Colonic mucosa (tissue), 4 donors: ENCODE measurements at regions of chr1 and their contacts with region 1.

Region 1: DNA sequence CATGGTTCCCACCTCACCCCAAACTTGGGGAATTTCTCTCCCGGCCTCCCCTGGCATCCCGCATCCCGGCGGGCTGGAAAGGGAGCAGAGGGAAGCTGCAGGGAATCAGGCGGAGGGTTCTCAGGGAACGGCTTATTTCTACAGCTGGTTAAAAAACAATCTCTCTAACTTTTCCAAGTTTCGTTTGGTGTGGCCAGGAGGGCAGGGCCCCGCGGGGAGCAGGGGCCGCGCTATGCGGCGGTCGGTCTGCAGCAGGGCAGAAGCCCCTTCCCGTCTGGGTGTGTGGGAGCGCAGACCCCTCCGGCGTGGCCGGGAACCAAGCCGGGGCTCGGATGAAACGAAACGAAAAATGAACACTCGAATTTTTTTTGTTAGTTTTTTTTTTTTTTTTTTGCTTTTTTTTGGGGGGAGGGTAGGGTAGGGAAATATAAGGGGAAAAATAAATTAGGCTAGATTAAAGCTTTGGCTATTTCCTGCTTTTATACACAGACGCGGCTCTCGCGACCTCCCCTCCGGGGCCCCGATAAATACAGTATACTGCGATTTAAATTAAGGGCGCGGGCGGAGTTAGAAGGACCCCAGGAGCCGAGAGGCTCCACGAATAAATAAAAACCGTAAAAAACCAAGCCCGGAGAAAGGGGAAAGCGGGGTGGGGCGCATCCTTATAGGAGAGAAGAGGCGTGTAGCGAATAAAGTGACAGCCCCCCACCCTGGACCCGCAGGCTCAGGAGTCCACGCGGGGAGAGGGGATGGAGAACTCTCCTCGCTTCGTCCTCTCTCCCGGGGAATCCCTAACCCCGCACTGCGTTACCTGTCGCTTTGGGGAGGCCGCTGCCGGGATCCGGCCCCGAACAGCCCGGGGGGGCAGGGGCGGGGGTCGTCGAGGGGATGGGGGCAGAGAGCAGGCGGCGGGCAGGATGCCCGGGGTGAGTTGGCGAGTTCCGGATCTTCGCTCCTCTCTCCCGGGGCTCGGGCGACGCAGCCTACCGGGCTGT is 2.1 kb downstream of the POU3F1 start:
- DNase-seq: no peak
- H3K4me3 ChIP-seq: no peak overlapping the region
- H3K27ac ChIP-seq: no peak overlapping the region
- H3K4me1 ChIP-seq: no peaks in the 10 kb centered on the region
- H3K27me3 ChIP-seq: peaks cover 55% of the 10 kb centered on the region
- CTCF ChIP-seq: no peak

Region 2: GRCh38 chr1:38586993-38587646 is 542.6 kb after region 1 on chr1:
- intact Hi-C with region 1: loop called (anchors 5 kb)
- DNase-seq: peak; percentile 46
- H3K4me3 ChIP-seq: no peak overlapping the region
- H3K27ac ChIP-seq: no peak overlapping the region
- H3K4me1 ChIP-seq: no peaks in the 10 kb centered on the region
- H3K27me3 ChIP-seq: no peaks in the 10 kb centered on the region
- CTCF ChIP-seq: peak; percentile 82